MCF 10A (cell line): ENCODE measurements at regions of chr15 and their contacts with region 1.

Region 1: GRCh38 chr15:43105778-43106485 is at the start of gene UBR1:
- DNase-seq: peak; percentile 87
- H3K4me3 Mint-ChIP-seq: peak within 1 kb of the TSS; percentile 82
- H3K27ac Mint-ChIP-seq: peak within 1 kb of the TSS; percentile 97
- H3K4me1 Mint-ChIP-seq: peaks cover 37% of the 10 kb centered on the region
- H3K27me3 Mint-ChIP-seq: no peaks in the 10 kb centered on the region
- CTCF ChIP-seq: no peak
- total RNA-seq, gene UBR1: 25.6 and 32.6 TPM in 2 replicates

Region 2: DNA sequence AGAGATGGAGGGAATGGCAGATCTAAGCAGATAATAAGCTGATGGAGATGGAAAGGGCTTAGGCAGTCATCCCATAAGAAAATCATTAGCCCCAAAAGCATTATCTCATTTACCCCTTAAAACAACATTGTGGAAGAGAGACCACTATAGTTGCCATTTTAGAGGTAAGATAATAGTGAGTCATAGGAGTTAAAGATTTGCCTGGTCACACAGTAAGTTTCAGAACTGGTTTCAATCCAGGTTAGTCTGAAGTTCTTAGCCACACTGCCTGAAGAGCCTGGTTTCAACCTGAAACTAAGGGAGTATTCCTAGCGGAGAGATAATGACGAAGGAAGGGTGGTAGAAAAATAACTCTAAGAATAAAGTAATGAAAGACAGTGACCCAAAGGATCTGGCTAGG is 12.9 kb after region 1 on chr15:
- CTCF ChIA-PET with region 1: interaction called, 4 read pairs
- POLR2A ChIA-PET with region 1: interaction called, 31 read pairs
- intact Hi-C with region 1: no loop called
- DNase-seq: no peak
- H3K4me3 Mint-ChIP-seq: no peak overlapping the region
- H3K27ac Mint-ChIP-seq: no peak overlapping the region
- H3K4me1 Mint-ChIP-seq: peaks cover 11% of the 10 kb centered on the region
- H3K27me3 Mint-ChIP-seq: peaks cover 35% of the 10 kb centered on the region
- CTCF ChIP-seq: no peak

Region 3: GRCh38 chr15:43133430-43134156 is 27.7 kb after region 1 on chr15 and contains the start of gene TMEM62:
- CTCF ChIA-PET with region 1: no interaction called
- POLR2A ChIA-PET with region 1: interaction called, 58 read pairs
- intact Hi-C with region 1: no loop called
- DNase-seq: peak; percentile 87
- H3K4me3 Mint-ChIP-seq: peak within 1 kb of the TSS; percentile 77
- H3K27ac Mint-ChIP-seq: peak within 1 kb of the TSS; percentile 82
- H3K4me1 Mint-ChIP-seq: peaks cover 10% of the 10 kb centered on the region
- H3K27me3 Mint-ChIP-seq: no peaks in the 10 kb centered on the region
- CTCF ChIP-seq: no peak
- total RNA-seq, gene TMEM62: 16.3 and 16.9 TPM in 2 replicates

Region 4: DNA sequence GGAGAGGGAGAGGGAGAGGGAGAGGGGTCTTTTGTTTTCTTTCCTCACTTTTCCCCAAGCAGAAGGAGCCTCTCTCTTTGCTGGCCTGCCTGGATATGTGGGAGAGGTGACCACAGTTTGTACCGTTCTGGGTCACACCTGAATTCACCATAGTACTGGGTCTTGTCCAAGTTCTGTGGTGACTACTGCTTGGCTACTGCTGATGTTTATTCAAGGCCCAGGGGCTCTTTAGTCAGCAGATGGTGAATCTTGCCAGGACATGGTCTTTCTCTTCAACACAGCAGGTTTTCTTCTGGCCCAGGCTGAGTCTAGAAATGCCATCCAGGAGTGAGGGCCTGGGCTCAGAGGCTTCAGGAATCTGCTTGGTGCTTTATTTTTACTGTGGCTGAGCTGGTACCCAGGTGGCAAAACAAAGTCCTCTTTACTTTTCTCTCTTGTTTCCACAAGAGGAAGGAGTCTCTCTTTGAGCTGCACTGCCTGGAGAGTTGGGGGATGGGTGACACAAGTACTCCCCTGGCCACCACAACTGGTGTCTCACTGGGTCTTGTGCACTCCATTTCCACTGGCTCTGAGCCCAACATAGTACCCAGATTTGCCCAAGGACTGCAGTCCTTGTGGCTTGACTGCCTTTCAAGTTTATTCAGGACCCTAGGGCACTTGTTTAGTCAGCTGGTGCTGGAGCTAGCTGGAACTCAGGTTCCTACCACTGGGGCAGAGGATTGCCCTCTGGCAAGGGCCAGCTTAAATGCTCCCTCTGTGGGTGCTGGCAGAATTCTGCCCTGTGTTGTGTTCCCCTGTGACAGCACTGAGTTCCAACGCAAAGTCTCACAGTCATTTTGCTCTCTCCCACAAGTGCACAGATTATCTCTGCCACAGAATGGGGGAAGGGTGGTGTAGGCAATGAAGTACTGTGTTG is 62.5 kb after region 1 on chr15:
- CTCF ChIA-PET with region 1: no interaction called
- POLR2A ChIA-PET with region 1: interaction called, 29 read pairs
- intact Hi-C with region 1: no loop called
- DNase-seq: peak; percentile 96
- H3K4me3 Mint-ChIP-seq: peak overlapping the region; percentile 49
- H3K27ac Mint-ChIP-seq: peak overlapping the region; percentile 85
- H3K4me1 Mint-ChIP-seq: peaks cover 21% of the 10 kb centered on the region
- H3K27me3 Mint-ChIP-seq: no peaks in the 10 kb centered on the region
- CTCF ChIP-seq: no peak